Gastrocnemius medialis (tissue), 4 donors: ENCODE measurements at regions of chr11 and their contacts with region 1.

Region 1: DNA sequence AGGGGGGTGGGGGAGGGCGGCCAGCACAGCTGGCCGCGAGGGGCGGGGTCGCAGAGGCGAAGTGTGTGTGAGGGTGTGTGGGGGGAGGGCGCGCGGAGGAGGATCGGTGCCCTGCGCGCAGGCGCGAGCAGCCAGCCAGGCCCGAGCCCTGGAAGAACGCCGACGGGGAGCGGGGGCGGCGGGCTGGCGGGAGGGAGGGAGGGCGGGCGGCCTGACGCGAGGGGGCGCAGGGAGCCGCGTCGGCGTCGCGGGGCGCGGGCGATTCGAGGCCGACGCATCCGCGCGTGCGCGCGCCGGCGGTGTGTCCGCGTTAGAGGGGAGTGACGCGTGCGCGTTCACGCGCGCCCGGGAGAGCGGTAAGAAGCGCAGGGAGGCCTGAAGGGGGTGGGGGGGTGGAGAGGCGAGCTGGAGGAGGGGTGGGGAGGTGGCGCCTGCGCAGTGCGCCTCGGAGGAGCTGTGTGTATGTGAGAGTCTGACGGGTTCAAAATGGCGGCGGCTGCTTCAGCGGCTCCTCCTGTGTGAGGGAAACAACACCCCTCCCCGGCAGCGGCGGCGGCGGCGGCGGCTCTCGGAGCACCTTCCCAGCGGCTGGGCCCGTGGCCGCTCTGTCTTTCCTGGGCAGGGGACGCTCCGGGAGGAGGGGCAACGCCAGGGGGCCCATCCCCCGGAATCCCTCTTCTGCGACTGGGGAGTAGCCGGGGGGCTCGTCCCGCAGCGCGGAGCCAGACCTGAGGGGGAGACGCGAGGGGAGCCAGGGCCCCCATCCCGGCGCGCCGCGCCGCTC is at the start of gene KDM2A:
- DNase-seq: peak; percentile 99
- ATAC-seq: peak; percentile 82 to 85
- H3K4me3 ChIP-seq: peak within 1 kb of the TSS; percentile 82 to 98 (median 94)
- H3K27ac ChIP-seq: peak within 1 kb of the TSS; percentile 98 to 100 (median 99)
- H3K4me1 ChIP-seq: peaks cover 26 to 35% of the 10 kb centered on the region in 2 donors
- H3K27me3 ChIP-seq: no peaks in the 10 kb centered on the region
- CTCF ChIP-seq: peak in 1 of 5 experiments; percentile 27
- POLR2A ChIP-seq: peak; percentile 73 to 84
- total RNA-seq, gene KDM2A: 34.8 to 55.0 (median 44.9) TPM

Region 2: GRCh38 chr11:67006139-67006884 is 112.7 kb before region 1 on chr11:
- in situ Hi-C with region 1: no loop called
- intact Hi-C with region 1: no loop called
- DNase-seq: peak; percentile 10 to 40
- ATAC-seq: peak; percentile 52 to 60
- H3K4me3 ChIP-seq: no peak overlapping the region
- H3K27ac ChIP-seq: no peak overlapping the region
- H3K4me1 ChIP-seq: no peaks in the 10 kb centered on the region
- H3K27me3 ChIP-seq: no peaks in the 10 kb centered on the region
- CTCF ChIP-seq: no peak
- POLR2A ChIP-seq: no peak

Region 3: DNA sequence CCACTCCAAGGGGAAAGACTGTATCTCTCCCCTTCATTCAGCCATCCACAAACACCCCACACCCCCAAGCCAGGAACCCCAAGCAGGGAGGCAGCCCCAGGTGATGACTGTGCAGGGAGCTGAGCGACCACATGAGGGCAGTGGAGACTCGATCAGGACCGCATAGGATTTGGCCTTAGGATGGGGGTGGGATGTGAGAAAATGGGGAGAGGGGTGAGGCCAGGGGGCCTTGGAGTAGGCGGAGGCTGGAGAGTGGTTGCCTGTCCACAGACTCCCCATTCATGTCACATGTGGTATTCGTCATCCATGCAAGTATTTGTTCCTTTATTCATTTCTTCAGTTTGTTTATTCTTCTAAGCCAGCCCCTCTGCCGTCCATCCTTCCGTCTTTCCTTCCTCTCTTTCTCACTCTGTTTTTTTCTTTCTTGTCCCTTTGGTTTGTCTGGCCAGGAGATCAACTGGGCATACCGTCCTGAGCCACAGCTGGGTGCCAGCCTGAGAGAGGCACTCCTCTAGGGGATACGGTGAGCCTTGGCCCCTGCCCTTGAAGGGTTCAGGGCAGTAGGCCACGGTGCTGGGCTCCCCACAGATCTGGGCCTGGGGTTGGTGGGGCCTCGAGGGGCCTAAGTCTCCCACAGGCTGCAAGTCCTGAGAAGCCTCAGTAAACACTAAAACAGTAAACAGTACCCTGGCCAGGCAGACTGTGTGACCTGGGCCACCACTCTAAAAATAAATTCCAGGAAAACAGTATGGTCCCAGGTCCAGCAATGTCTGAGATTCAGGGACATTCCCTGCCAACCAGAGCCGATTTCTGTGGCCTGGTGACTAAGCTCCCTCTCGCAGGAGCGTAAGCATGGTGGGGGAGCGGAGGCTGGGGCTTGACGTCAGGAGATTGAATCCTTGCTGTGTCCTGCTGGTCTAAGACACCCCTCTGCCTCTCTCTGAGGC is 64.8 kb before region 1 on chr11:
- in situ Hi-C with region 1: no loop called
- intact Hi-C with region 1: loop called (anchors 2 kb)
- DNase-seq: peak; percentile 47 to 67
- ATAC-seq: peak; percentile 50 to 67
- H3K4me3 ChIP-seq: no peak overlapping the region
- H3K27ac ChIP-seq: peak overlapping the region; percentile 73 to 90 (median 84)
- H3K4me1 ChIP-seq: peaks cover 14 to 28% of the 10 kb centered on the region in 2 donors
- H3K27me3 ChIP-seq: no peaks in the 10 kb centered on the region
- CTCF ChIP-seq: peak; percentile 36 to 79 (median 69)
- POLR2A ChIP-seq: peak in 1 of 2 donors; percentile 43

Region 4: DNA sequence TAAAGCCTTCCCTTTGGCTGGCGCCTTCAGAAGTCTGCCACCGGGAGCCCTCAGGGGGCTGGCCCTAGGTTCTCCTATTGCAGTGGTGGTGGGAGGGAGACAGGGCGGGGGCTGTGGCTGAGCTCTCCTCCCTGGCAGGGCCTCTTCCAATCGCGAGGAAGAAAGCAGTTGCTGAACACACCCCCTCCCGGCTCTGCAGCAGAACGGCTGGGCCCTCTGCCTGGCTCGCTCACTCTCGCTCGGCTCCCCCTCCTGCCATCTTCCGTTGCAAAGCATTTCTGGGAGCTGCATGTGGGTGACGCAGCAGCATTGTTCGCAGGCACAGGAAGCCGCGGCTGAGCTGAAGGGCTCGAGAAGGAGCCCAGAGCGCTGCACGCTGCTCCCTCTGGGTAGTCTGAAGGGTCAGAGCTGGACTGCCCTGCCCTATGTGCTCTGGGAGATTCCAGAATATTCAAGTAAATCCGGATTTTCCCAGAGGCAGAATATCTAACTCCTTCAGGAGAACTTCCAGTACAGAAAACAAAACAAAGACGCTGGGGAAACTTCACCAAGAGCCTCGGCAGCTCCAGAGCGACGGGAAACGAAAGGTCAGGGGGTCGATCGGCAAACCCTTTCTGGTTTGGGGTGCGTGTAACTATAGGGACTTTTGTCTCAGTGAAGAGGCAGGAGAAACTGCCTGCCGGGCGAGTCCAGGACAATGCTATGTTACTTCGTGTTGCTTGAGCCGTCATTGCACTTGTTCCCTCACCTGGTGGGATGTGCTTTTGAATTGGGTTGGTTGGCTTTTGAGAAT is 121.0 kb after region 1 on chr11:
- in situ Hi-C with region 1: no loop called
- intact Hi-C with region 1: loop called (anchors 1 kb)
- DNase-seq: peak; percentile 98
- ATAC-seq: peak; percentile 91 to 92
- H3K4me3 ChIP-seq: peak overlapping the region; percentile 63 to 74 (median 68)
- H3K27ac ChIP-seq: peak overlapping the region; percentile 89 to 94 (median 90)
- H3K4me1 ChIP-seq: peaks cover 43 to 46% of the 10 kb centered on the region in 2 donors
- H3K27me3 ChIP-seq: no peaks in the 10 kb centered on the region
- CTCF ChIP-seq: peak in 2 of 5 experiments; percentile 28 to 34
- POLR2A ChIP-seq: peak; percentile 90 to 92